PC-9 (cell line): ENCODE measurements at regions of chr10 and their contacts with region 1.

Region 1: DNA sequence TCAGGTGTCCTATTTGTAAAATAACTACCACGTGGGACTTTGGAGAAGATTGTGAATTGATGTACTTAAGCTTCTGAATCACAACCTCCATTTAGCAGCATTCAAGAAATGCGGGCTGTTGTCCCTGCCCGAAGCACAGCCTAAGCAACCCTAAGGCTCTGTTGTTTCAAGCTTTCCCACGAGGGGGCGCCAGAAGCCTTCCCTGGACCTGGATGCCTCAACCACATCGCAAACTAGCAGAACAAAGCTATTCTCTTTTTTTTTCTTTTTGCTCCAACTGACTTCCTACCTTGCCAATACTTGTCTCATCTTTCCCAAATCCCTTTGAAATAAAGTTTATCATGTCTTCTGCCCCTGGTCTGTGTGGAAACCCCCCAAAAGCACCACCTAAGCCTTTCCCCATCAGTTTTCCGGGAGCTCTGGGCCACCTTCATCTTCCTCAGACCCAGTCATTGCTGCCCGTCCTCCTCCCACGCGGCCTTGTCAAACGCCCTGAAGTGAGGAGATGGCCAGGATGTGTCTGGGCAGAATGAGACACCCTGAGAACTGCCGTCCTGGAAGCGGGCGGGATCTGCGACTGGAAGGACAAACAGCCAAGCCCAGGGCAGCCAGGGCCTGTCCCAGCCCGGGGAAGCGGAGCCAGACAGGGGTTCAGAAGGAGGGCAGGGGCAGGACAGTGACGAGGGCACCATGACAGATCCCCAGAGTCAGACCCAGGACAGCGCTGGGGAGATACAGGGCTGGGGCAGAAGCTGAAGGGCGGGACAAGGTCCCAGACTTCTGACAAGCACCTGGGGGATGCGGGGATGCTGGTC is 112.7 kb downstream of the SLIT1 start:
- DNase-seq: peak in 1 of 2 experiments; percentile 78
- H3K4me3 ChIP-seq: no peak overlapping the region
- H3K27ac ChIP-seq: no peak overlapping the region
- H3K4me1 ChIP-seq: no peaks in the 10 kb centered on the region
- H3K27me3 ChIP-seq: 0 out of 2 replicates have a peak, but pooled peaks cover 7% of the 10 kb centered on the region
- CTCF ChIP-seq: peak; percentile 81

Region 2: DNA sequence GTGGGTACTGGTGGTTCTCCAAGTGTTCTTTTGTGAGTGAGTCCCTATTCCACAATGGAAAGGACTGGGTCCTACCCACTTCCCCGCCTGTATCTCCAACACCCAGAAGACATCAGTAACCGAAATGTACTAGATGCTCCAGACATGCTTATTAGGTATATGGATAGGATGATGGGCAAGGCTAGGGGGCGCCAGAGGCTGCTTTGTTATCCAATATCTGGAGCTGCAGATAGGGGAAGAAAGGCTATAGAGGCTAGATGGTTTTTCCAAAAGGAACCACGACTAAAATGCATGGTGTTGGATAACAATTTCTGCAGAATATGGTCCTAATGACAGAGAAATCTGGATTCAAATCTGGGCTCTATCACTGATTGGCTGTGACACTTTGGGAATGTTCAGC is 430.1 kb before region 1 on chr10:
- CTCF ChIA-PET with region 1: no interaction called
- POLR2A ChIA-PET with region 1: no interaction called
- intact Hi-C with region 1: loop called (anchors 5 kb)
- DNase-seq: peak in 1 of 2 experiments; percentile 35
- H3K4me3 ChIP-seq: no peak overlapping the region
- H3K27ac ChIP-seq: no peak overlapping the region
- H3K4me1 ChIP-seq: peaks cover 23% of the 10 kb centered on the region
- H3K27me3 ChIP-seq: no peaks in the 10 kb centered on the region
- CTCF ChIP-seq: peak; percentile 47; the same call in 1 of the 2 replicates

Region 3: DNA sequence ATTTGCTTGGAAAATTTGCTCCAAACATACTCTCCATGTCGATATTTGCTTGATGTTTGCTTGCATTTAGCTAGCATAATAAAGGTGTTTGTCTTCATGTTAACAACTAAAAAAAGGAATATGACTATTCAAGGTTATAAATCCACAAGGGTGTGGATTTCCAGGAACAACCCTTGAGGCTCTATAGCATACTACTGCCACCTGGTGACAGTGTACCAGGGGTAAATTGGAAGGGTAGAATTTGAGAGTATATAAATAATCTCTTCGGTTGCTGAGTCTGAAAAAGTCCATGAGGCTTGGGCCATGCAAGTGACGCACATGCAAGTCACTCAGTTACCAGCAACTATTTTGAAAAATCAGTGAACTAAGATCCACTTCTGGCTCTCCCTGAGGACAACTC is 44.3 kb after region 1 on chr10:
- CTCF ChIA-PET with region 1: interaction called, 5 read pairs
- POLR2A ChIA-PET with region 1: no interaction called
- intact Hi-C with region 1: loop called (anchors 2 kb)
- DNase-seq: peak in 1 of 2 experiments; percentile 11
- H3K4me3 ChIP-seq: no peak overlapping the region
- H3K27ac ChIP-seq: no peak overlapping the region
- H3K4me1 ChIP-seq: no peaks in the 10 kb centered on the region
- H3K27me3 ChIP-seq: peaks cover 43% of the 10 kb centered on the region
- CTCF ChIP-seq: peak; percentile 61

Region 4: DNA sequence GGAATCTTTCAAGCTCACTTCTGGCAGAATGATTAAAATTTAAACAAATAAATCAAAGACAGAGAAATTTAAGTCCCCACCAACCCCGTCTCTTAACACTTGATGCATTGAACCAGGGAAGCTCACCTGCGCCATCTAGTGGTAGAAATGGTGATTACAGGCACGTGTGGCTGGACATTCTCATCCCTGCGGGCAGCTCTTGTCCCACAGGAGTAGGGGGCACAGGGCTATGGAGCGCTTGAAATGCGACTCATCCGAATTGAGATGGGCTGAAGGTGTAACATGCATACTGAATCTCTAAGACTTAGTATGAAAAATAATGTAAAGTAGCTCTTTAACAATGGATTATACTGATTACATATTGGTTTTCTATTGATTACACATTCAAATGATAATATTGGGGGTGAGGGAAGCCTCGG is 137.5 kb after region 1 on chr10:
- CTCF ChIA-PET with region 1: interaction called, 4 read pairs
- POLR2A ChIA-PET with region 1: no interaction called
- intact Hi-C with region 1: loop called (anchors 1 kb)
- DNase-seq: peak in 1 of 2 experiments; percentile 55
- H3K4me3 ChIP-seq: no peak overlapping the region
- H3K27ac ChIP-seq: no peak overlapping the region
- H3K4me1 ChIP-seq: no peaks in the 10 kb centered on the region
- H3K27me3 ChIP-seq: no peaks in the 10 kb centered on the region
- CTCF ChIP-seq: peak; percentile 92